Caco-2 (cell line): ENCODE measurements at regions of chr7 and their contacts with region 1.

Region 1: GRCh38 chr7:128343554-128344430 is at the start of gene RBM28:
- DNase-seq: peak; percentile 92
- H3K4me3 ChIP-seq: peak within 1 kb of the TSS; percentile 86
- H3K4me3 Mint-ChIP-seq: peak within 1 kb of the TSS; percentile 72
- H3K27ac Mint-ChIP-seq: peak within 1 kb of the TSS; percentile 19
- H3K4me1 ChIP-seq: no peaks in the 10 kb centered on the region
- H3K4me1 Mint-ChIP-seq: peaks cover 8% of the 10 kb centered on the region
- H3K27me3 ChIP-seq: no peaks in the 10 kb centered on the region; the same call in 1 of the 2 replicates
- H3K27me3 Mint-ChIP-seq: peaks cover 3% of the 10 kb centered on the region
- CTCF ChIP-seq: no peak
- total RNA-seq, gene RBM28: 68.0 and 71.4 TPM in 2 replicates

Region 2: DNA sequence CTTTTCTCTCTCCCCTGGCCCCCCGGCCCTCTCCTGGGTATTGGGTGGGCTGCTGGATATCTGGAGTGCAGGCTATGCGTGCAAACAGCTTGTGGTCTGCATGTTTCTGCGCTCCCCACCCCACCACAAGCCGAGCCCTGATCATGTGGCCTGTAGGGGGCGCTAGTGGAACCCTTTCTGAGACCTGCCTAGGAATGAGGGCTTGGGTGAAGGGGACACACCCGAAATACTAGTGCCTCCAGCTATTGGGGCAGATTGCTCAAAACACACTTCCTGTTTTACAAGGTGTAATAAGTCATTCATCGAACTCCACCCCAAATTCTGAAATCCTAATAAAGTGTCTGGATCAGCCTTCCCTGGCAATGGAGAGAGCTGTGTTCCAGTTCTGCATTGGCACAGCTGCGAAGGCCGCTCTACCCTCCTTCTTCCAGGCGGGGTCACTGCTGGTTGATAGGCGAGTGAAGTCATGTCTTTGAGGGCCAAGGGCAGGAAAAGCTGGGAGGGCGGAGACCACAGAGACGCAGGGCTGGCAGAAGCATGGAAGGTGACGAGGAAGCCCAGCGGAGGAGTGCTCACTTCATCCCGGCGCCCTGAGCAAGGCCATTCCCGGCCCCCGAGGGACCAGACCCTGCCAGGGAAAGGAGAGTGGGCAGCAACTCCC is 37.5 kb after region 1 on chr7:
- CTCF ChIA-PET with region 1: interaction called, 109 read pairs
- POLR2A ChIA-PET with region 1: no interaction called
- intact Hi-C with region 1: no loop called
- DNase-seq: peak in 1 of 2 experiments; percentile 30
- H3K4me3 ChIP-seq: no peak overlapping the region
- H3K4me3 Mint-ChIP-seq: no peak overlapping the region
- H3K27ac Mint-ChIP-seq: no peak overlapping the region
- H3K4me1 ChIP-seq: no peaks in the 10 kb centered on the region
- H3K4me1 Mint-ChIP-seq: no peaks in the 10 kb centered on the region
- H3K27me3 ChIP-seq: no peaks in the 10 kb centered on the region
- H3K27me3 Mint-ChIP-seq: no peaks in the 10 kb centered on the region
- CTCF ChIP-seq: peak; percentile 46 to 60

Region 3: GRCh38 chr7:128387216-128388144 is 43.7 kb after region 1 on chr7:
- CTCF ChIA-PET with region 1: interaction called, 109 read pairs
- POLR2A ChIA-PET with region 1: interaction called, 4 read pairs
- intact Hi-C with region 1: loop called (anchors 1 kb)
- DNase-seq: peak; percentile 82 to 85
- H3K4me3 ChIP-seq: no peak overlapping the region
- H3K4me3 Mint-ChIP-seq: no peak overlapping the region
- H3K27ac Mint-ChIP-seq: no peak overlapping the region
- H3K4me1 ChIP-seq: no peaks in the 10 kb centered on the region
- H3K4me1 Mint-ChIP-seq: no peaks in the 10 kb centered on the region
- H3K27me3 ChIP-seq: no peaks in the 10 kb centered on the region
- H3K27me3 Mint-ChIP-seq: no peaks in the 10 kb centered on the region
- CTCF ChIP-seq: peak; percentile 81 to 91